Sigmoid colon (tissue), 7 donors: ENCODE measurements at regions of chr10 and their contacts with region 1.

Region 1: DNA sequence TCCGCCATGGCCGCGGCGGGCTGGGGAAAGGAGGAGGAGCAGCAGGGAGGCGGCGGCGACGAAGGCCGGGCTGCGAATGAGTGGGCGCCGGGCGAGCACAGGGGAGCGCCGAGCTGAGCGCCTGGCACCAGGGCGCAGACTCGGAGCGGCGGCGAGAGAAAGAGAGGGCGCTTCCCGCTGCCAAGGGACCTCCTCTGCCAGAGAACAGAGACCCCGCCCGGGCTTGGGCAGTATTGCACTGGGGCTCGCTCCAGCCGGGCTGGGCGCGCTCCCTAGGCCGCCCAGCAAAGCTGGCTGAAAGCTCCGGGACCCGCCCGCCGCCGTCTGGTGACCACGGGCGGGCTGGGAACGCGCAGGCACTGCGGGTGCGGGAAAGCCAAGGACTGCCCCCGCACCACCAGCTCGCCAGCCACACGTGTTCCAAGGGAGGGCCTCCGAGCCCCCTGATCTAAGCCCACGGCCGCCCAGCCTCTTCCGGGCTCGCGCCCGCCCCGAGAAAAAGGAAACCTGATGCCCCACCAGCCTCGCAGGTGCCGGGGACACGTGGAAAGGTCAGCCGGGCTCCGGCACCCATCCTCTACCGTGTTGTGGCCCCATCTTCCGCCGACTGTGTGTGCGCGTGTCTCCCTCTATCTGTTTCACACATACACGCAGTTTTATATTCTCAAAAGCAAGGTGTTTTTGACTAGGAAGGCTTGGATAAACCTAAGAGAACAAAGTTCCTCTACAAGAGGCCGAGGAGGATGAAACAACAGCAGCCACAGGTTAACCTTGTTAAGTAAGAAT is at the start of gene CCDC6:
- DNase-seq: peak; percentile 97
- H3K4me3 ChIP-seq: peak within 1 kb of the TSS; percentile 67 to 96 (median 88)
- H3K27ac ChIP-seq: peak within 1 kb of the TSS; percentile 93
- H3K4me1 ChIP-seq: peaks cover 0 to 59% (median 42%) of the 10 kb centered on the region in 4 donors
- H3K27me3 ChIP-seq: no peaks in the 10 kb centered on the region
- CTCF ChIP-seq: peak; percentile 66 to 92 (median 72)
- EP300 ChIP-seq: no peak
- POLR2A ChIP-seq: peak; percentile 77 to 82
- total RNA-seq, gene CCDC6: 59.2 to 97.5 (median 62.2) TPM

Region 2: DNA sequence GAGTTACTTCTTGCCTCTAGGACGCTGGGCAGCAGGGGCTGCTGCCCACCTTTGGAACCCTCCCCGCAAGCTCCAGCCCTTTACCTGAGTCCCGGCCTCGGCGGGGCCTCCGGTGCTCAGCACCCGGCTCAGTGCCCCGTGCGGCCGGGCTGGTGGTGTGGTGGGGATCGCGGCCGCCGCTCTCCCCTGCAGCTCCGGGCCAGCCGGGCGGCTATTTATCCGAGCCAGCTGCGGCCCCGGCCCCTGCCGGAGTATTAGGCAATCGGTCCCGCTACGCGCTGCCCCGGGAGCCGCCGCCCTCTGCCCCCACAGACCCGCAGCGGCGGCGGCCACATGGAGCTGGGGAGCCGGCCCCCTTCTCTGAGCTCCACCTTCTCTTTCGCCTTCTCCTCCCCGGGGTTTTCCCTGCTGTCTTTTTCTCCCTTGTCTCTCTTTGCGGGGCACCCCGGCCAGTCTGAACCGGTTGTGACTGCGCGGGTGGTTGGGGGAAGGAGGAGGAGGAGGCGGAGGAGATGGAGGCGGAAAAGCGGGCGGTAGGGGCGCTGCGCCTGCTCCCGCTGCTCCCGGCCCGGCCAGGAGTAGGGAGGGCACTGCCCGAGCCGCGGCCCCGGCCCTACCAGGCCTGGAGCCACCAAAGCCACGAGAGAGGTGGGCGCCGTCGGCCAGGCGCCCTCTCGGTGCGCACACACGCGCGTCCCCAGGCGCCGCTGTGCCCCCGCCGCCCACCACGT is 197.1 kb before region 1 on chr10 and contains the start of gene SLC16A9:
- intact Hi-C with region 1: loop called (anchors 5 kb)
- DNase-seq: peak; percentile 67
- H3K4me3 ChIP-seq: peak within 1 kb of the TSS; percentile 51 to 70 (median 60)
- H3K27ac ChIP-seq: peak within 1 kb of the TSS; percentile 13 to 52 (median 48)
- H3K4me1 ChIP-seq: peaks cover 0 to 18% (median 12%) of the 10 kb centered on the region in 4 donors
- H3K27me3 ChIP-seq: peaks cover 0 to 18% (median 0%) of the 10 kb centered on the region in 3 donors
- CTCF ChIP-seq: peak in 1 of 4 experiments; percentile 4
- EP300 ChIP-seq: no peak
- POLR2A ChIP-seq: no peak
- total RNA-seq, gene SLC16A9: 0.36 to 0.55 (median 0.54) TPM in 3 of 4 donors, not detected in the other

Region 3: DNA sequence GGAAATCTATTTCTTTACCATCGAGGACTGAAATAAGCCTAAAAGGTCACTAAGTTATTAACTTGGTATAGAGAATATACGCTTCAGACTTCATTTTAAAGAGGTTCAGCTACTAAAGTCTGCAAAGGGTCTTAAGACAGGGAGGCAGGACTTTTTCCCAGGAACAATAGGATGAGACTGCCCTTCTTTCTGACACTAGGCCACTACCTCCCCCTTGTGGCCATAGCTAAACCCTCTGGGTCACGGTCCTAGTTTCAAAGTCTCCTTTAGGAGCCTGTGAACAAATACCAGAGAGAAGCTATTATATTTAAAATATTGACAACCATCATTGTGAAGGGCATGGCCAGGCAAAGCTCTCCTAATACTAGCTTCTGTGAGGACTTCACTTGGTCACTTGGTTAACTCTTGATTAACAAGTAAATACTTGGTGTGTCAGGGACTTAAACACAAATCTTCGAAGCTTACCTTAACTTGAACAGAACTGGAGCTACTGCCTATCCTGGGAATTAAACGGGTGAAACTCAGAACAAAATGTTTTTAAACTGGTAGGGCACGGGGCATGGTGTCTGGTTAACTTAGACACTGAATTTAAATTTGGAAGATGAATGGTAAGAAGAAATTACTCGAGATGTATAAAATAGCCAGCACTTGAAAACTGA is 75.9 kb before region 1 on chr10:
- intact Hi-C with region 1: loop called (anchors 2 kb)
- DNase-seq: no peak
- H3K4me3 ChIP-seq: no peak overlapping the region
- H3K27ac ChIP-seq: no peak overlapping the region
- H3K4me1 ChIP-seq: peaks cover 0 to 32% (median 30%) of the 10 kb centered on the region in 4 donors
- H3K27me3 ChIP-seq: no peaks in the 10 kb centered on the region
- CTCF ChIP-seq: peak; percentile 19 to 78 (median 56)
- EP300 ChIP-seq: no peak
- POLR2A ChIP-seq: no peak

Region 4: GRCh38 chr10:59872892-59873463 is 33.6 kb before region 1 on chr10:
- intact Hi-C with region 1: loop called (anchors 2 kb)
- DNase-seq: peak; percentile 92
- H3K4me3 ChIP-seq: peak overlapping the region in 3 of 4 donors; percentile 1 to 26 (median 13)
- H3K27ac ChIP-seq: peak overlapping the region; percentile 69 to 87 (median 78)
- H3K4me1 ChIP-seq: peaks cover 0 to 87% (median 68%) of the 10 kb centered on the region in 4 donors
- H3K27me3 ChIP-seq: no peaks in the 10 kb centered on the region
- CTCF ChIP-seq: no peak
- EP300 ChIP-seq: peak; percentile 21 to 92 (median 69)
- POLR2A ChIP-seq: no peak